Heart right ventricle (tissue), 16 donors: ENCODE measurements at regions of chr22 and their contacts with region 1.

Region 1: DNA sequence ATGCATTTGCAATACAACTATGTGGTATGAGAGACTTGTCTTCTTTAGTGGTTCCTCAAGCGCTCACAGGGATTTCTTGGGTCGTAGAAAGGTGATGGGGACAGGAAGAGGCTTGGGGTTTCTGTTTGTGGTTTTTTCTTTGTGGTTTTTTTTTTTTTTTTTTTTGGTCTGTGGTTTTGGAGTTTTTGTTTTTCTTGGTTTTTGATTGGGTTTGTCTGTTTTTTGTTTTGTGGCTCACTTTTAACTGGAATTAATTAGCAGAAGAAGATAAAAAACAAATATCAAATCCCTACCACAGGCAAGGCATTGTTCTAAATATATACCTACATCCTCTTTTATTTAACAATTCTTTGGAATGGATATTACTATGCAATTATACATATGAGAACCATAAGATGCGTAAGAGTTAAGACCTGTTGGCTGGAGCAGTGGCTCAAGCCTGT is 5.5 kb downstream of the TTC28 start:
- DNase-seq: no peak
- ATAC-seq: no peak
- H3K4me3 ChIP-seq: no peak overlapping the region
- H3K27ac ChIP-seq: no peak overlapping the region
- H3K4me1 ChIP-seq: peaks cover 0 to 25% (median 9%) of the 10 kb centered on the region in 9 donors
- H3K27me3 ChIP-seq: peaks cover 0 to 86% (median 0%) of the 10 kb centered on the region in 7 donors
- CTCF ChIP-seq: no peak

Region 2: GRCh38 chr22:28711820-28712777 is 38.0 kb after region 1 on chr22:
- intact Hi-C with region 1: loop called in 1 of 10 experiments (anchors 2 kb)
- DNase-seq: no peak
- ATAC-seq: peak in 7 of 8 donors; percentile 23 to 90 (median 56)
- H3K4me3 ChIP-seq: peak overlapping the region in 3 of 10 donors; percentile 1 to 4 (median 3)
- H3K27ac ChIP-seq: peak overlapping the region in 9 of 10 donors; percentile 14 to 82 (median 65)
- H3K4me1 ChIP-seq: peaks cover 4 to 25% (median 20%) of the 10 kb centered on the region in 9 donors
- H3K27me3 ChIP-seq: no peaks in the 10 kb centered on the region
- CTCF ChIP-seq: no peak